ENCODE measurements at regions of chr11 and their contacts with region 1.

Region 1: GRCh38 chr11:19903620-19904069 is 191.0 kb downstream of the NAV2 start:
- H3K4me3 Mint-ChIP-seq: no peak overlapping the region
- H3K27ac Mint-ChIP-seq: no peak overlapping the region
- H3K4me1 Mint-ChIP-seq: no peaks in the 10 kb centered on the region
- H3K27me3 Mint-ChIP-seq: peaks cover 2% of the 10 kb centered on the region

Region 2: DNA sequence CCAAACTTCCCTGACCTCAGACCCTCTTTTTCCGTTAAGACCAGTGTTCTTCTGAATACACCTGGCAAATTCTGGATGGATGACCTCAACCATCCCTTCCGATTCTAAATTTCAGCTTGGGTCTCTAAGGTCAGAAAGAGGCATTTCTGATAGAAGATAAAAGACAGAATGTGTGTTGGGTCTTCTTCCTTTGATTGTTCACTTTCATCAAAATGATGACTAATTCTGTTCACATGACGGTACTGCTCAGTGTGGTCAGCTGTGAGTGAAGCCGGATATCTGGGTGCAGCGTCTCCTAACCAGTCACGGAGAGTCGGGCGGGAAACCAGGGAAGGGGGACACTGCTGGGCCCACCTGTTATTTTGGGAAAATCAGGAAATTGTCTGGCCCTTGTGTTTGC is 342.6 kb before region 1 on chr11:
- intact Hi-C with region 1: loop called (anchors 1 kb)
- H3K4me3 Mint-ChIP-seq: no peak overlapping the region
- H3K27ac Mint-ChIP-seq: no peak overlapping the region
- H3K4me1 Mint-ChIP-seq: no peaks in the 10 kb centered on the region
- H3K27me3 Mint-ChIP-seq: peaks cover 16% of the 10 kb centered on the region

Region 3: GRCh38 chr11:19742588-19743292 is 160.9 kb before region 1 on chr11:
- intact Hi-C with region 1: loop called (anchors 5 kb)
- H3K4me3 Mint-ChIP-seq: no peak overlapping the region
- H3K27ac Mint-ChIP-seq: no peak overlapping the region
- H3K4me1 Mint-ChIP-seq: no peaks in the 10 kb centered on the region
- H3K27me3 Mint-ChIP-seq: peaks cover 5% of the 10 kb centered on the region

Region 4: GRCh38 chr11:19879307-19880087 is 24.1 kb before region 1 on chr11:
- intact Hi-C with region 1: no loop called
- H3K4me3 Mint-ChIP-seq: no peak overlapping the region
- H3K27ac Mint-ChIP-seq: no peak overlapping the region
- H3K4me1 Mint-ChIP-seq: no peaks in the 10 kb centered on the region
- H3K27me3 Mint-ChIP-seq: no peaks in the 10 kb centered on the region

Measured in dendritic cell treated with granulocyte-macrophage colony-stimulating factor and Interleukin-4, amounts not matched to agents 40 ng/mL and 50 ng/mL, for 4 days (primary cell).